Right ventricle myocardium inferior (tissue), 1 donor: ENCODE measurements at regions of chr19 and their contacts with region 1.

Region 1: DNA sequence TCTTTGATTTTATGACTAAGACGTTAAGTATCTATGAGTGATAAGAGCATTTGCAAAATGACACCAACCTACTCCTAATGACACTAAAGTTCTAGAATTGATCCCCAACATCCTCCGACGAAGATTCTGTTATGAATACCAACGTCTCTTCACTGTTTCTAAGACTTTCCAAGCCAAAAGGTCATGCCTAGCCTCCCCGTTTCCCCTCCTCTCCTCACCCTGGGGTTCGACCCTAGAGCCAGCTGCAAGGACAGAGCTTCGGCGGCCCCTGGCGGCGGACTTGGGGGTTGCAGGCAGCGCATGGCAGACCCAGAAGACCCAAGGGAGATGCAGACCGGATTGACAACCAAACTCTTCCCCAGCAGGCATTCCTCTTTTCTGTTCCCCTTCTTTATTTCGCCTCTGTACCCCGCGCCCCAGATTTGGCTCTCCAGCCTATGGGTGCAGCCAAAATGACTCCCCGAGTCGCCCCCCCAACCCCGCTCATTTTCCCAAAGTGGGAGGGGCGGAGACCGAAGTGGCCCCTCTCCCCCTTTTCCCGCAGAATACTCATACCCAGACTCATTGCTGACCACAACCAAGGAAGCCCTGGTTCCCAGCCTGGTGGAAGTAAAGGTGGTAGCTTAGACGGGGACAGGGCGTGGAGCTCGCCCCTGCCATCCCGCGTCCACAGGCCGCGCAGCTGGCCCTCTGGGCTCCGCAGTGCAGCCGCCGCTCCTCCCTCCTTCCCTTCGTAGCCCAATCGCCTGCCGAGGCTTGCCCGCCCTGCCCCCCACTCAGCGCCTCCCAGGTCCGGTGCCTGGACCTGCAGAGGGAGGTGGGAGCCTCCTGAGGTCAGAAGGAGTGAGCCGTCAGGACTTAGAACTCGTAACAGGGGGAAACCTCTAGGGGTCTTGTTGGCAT is 4.1 kb upstream of the EML2 start:
- DNase-seq: peak; percentile 93
- ATAC-seq: peak; percentile 42

Region 2: DNA sequence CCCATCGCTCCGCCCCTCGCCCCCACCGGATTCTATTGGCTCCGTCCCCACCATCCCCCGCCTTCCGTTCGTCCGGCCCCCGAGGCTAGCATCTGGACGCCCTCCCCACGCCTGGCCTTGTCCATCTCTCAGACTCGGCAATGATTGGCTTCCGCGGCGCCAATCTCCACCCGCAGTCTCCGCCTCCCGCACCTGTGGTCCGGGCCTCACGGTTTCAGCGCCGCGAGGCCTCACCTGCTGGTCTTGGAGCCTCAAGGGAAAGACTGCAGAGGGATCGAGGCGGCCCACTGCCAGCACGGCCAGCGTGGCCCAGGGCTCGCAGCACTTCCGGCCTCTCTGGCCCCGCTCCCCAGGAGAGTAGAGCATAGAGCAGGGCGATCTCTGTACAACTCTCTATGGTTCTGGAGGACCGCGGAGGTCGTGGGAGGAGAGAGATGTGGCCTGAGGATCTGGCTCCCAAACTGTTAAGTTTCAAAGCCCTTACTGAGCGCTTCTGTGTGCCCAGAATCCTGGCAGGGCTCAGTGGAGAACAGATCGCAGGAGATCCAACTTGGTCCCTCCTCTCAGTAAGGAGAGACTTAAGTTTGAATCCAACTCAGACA is 219.6 kb before region 1 on chr19 and contains the start of gene ERCC1:
- intact Hi-C with region 1: loop called (anchors 10 kb)
- DNase-seq: peak; percentile 97
- ATAC-seq: peak; percentile 85
- total RNA-seq, gene ERCC1: 166 TPM

Region 3: GRCh38 chr19:45496349-45496953 is 146.8 kb before region 1 on chr19:
- intact Hi-C with region 1: loop called (anchors 10 kb)
- DNase-seq: peak; percentile 67
- ATAC-seq: peak; percentile 14

Region 4: GRCh38 chr19:45523642-45524256 is 119.5 kb before region 1 on chr19:
- intact Hi-C with region 1: loop called (anchors 1 kb)
- DNase-seq: peak; percentile 90
- ATAC-seq: peak; percentile 96

Region 5: GRCh38 chr19:45569619-45570421 is 73.5 kb before region 1 on chr19:
- intact Hi-C with region 1: loop called (anchors 10 kb)
- DNase-seq: peak; percentile 78
- ATAC-seq: peak; percentile 63

Region 6: DNA sequence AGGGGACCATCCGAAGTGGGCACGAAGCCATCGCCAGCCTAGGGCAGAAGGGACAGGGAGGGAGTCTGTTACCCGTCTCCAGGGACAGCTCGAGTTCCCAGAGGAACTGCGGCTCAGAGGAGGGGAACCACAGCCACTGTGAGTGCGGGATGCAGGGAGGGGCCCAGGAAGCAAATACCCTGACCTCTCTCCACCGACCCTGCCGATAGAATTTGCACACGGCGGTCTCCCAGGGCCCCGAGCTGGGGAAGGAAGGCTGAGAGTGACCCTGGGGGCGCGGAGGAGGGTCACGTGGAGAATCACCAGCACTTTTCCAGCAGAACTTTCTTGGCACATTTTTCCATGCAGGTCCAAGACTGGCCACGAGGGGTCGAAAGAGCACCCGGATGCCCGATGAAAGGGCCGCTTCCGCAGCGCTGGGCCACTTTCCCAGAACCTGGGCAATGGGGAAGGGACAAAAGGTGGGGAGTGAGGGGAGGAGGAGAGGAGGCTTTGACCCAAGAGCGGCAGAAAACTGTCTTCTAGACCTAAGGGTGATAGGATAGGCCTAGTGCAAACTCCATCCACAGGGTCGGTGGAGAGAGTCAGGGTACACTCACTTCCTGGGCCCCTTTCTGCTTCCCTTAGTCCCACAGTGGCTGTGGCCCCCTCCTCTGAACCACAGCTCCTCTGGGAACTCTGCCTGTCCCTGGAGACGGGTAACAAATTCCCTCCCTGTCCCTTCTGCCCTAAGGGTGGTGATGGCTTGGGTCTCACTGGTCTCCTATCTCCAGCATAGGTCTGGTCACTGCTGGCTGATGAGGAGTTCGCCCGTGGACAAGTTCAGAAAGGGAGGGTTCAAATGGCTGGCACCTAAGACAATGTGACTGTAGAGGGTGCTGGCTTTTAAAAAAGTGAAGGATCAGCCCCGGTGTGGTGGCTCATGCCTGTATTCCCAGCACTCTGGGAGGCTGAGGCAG is 35.9 kb before region 1 on chr19:
- intact Hi-C with region 1: loop called (anchors 1 kb)
- DNase-seq: peak; percentile 82
- ATAC-seq: peak; percentile 78